ENCODE measurements at regions of chr10 and their contacts with region 1.

Region 1: GRCh38 chr10:96306516-96306915 is 2.3 kb downstream of the DNTT start:
- DNase-seq: no peak
- ATAC-seq: no peak
- H3K4me3 Mint-ChIP-seq: no peak overlapping the region
- H3K27ac Mint-ChIP-seq: no peak overlapping the region
- H3K4me1 Mint-ChIP-seq: peaks cover 52% of the 10 kb centered on the region
- H3K27me3 Mint-ChIP-seq: peaks cover 5% of the 10 kb centered on the region; the same call in 1 of the 2 replicates
- CTCF ChIP-seq: no peak

Region 2: DNA sequence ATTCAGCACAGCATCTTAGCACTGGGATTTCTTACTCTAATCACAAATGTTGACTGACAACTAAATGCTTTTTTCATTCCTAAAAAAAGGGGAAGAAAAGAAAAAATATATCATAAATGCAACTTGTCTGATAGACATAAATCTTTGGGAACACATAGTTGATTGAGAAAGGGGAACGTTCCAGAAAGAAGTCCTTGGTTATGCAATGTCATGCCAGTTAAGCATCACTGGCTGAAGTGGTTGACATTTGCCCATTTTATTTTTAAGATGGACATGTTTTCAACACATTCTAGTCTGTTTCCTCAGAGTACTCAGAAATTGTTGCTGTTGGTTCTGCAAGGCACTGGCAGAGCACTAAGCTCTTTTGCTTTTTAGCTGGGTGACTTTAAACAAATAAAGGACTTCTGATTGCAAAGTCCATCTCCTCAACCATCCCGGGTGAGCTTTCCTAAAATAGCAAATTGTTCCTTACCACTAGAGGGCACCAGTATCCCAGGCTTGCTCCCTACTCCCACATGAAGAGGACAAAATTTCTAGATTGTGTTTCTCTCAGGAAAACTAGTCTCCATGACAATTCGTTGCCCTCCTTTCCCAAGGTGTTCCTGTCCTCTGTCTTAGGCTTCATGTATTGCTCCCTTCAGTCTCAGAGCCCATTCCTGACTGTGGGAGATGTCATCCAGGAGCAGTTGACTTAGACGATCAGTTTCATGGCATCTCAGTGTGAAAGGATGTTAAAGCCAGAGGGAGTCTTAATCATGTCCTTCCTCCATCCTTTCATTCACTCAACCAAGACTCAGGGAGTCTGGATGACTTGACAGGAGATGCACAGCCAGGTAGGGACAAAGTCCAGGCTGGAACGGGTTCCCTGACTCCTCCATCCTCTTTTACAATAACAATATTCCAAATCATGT is 28.4 kb after region 1 on chr10:
- CTCF ChIA-PET with region 1: interaction called, 14 read pairs
- POLR2A ChIA-PET with region 1: interaction called, 3 read pairs
- DNase-seq: no peak
- ATAC-seq: peak; percentile 79
- H3K4me3 Mint-ChIP-seq: no peak overlapping the region
- H3K27ac Mint-ChIP-seq: no peak overlapping the region
- H3K4me1 Mint-ChIP-seq: peaks cover 26% of the 10 kb centered on the region
- H3K27me3 Mint-ChIP-seq: peaks cover 4% of the 10 kb centered on the region
- CTCF ChIP-seq: peak; percentile 75

Region 3: GRCh38 chr10:96339957-96340904 is 33.7 kb after region 1 on chr10:
- CTCF ChIA-PET with region 1: interaction called, 14 read pairs
- POLR2A ChIA-PET with region 1: no interaction called
- DNase-seq: peak; percentile 79
- ATAC-seq: peak; percentile 72
- H3K4me3 Mint-ChIP-seq: no peak overlapping the region
- H3K27ac Mint-ChIP-seq: no peak overlapping the region
- H3K4me1 Mint-ChIP-seq: peaks cover 59% of the 10 kb centered on the region
- H3K27me3 Mint-ChIP-seq: peaks cover 24% of the 10 kb centered on the region
- CTCF ChIP-seq: peak; percentile 71